SK-N-SH (cell line): ENCODE measurements at regions of chr17 and their contacts with region 1.

Region 1: GRCh38 chr17:41786227-41787020 is at the start of gene JUP:
- DNase-seq: peak; percentile 99
- H3K4me3 ChIP-seq: peak within 1 kb of the TSS; percentile 64 to 66
- H3K27ac ChIP-seq: peak within 1 kb of the TSS in 1 of 2 experiments; percentile 17; a peak in 1 of 4 replicates
- H3K4me1 ChIP-seq: peaks cover 10 to 32% of the 10 kb centered on the region in 2 experiments; a peak in 2 of 4 replicates
- H3K27me3 ChIP-seq: no peaks in the 10 kb centered on the region
- CTCF ChIP-seq: peak; percentile 63
- EP300 ChIP-seq: no peak
- RAD21 ChIP-seq: no peak
- polyA plus RNA-seq, gene JUP: 9.3 and 13.0 TPM in 2 replicates

Region 2: DNA sequence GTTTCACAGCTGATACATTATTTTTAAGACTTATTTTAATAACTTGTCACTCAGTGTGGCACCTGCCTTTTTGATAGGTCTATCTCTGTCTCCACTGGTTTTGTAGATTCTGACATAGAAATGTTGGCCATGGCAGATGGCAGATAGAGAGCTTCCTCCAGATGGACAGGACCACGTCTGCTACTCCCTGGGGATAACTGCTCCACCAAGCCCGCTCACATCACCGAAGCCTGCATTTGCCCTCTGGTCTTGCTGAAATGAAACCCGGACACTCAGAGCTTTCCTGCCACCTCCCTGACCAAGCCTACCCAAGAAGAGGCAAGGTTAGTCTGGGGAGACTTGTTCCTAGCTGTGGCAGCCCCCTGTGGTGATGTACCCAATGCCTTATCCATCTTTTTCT is 35.6 kb before region 1 on chr17:
- CTCF ChIA-PET with region 1: interaction called, 19 read pairs
- POLR2A ChIA-PET with region 1: interaction called, 4 read pairs
- DNase-seq: no peak
- H3K4me3 ChIP-seq: no peak overlapping the region
- H3K27ac ChIP-seq: no peak overlapping the region
- H3K4me1 ChIP-seq: no peaks in the 10 kb centered on the region; a peak in 1 of 4 replicates
- H3K27me3 ChIP-seq: no peaks in the 10 kb centered on the region
- CTCF ChIP-seq: no peak
- EP300 ChIP-seq: no peak
- RAD21 ChIP-seq: no peak

Region 3: DNA sequence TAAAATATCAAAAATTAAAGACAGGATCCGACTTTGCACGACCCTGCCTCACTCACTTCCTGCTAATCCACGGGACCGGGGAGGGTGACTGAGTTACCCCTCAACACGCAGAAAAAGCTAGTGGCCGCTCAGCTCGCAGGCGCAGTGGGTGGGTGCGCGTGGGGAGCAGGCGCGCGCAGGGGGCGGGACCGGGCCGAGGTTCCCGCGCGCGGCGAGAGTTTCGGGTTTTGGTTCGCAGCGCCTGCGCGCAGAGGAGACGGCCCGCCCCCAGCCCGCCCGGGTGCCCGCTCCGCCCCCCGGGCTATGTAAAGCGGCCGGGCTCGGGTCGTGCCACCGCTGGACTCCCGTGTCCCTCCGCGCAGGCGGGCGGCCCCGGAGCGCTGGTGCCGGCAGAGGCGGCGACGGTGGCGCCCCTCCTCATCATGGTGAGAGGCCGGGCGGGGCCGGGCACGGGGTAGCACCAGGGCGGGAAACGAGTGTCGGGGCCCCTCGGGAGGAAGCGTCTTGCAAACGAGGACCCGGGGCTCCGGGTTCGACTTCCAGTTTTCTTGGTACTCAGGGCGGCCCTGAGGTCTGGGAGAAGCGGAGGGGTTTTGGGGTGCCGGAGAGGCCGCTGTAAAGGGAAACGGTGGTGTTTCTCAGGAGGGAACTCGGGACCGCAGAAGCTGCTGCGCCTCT is 180.2 kb after region 1 on chr17 and contains the start of gene CNP:
- CTCF ChIA-PET with region 1: no interaction called
- POLR2A ChIA-PET with region 1: no interaction called
- DNase-seq: peak; percentile 99
- H3K4me3 ChIP-seq: peak within 1 kb of the TSS; percentile 93 to 96
- H3K27ac ChIP-seq: peak within 1 kb of the TSS; percentile 65 to 91
- H3K4me1 ChIP-seq: peaks cover 5 to 34% of the 10 kb centered on the region in 2 experiments; a peak in 2 of 4 replicates
- H3K27me3 ChIP-seq: no peaks in the 10 kb centered on the region
- CTCF ChIP-seq: no peak
- EP300 ChIP-seq: no peak
- RAD21 ChIP-seq: no peak
- polyA plus RNA-seq, gene CNP: 44.8 and 54.8 TPM in 2 replicates